MCF 10A (cell line): ENCODE measurements at regions of chr20 and their contacts with region 1.

Region 1: GRCh38 chr20:11890331-11891080 is 27.2 kb upstream of the BTBD3 start:
- DNase-seq: peak; percentile 84
- H3K4me3 Mint-ChIP-seq: peak overlapping the region; percentile 76
- H3K27ac Mint-ChIP-seq: peak overlapping the region; percentile 87
- H3K4me1 Mint-ChIP-seq: peaks cover 14% of the 10 kb centered on the region
- H3K27me3 Mint-ChIP-seq: no peaks in the 10 kb centered on the region
- CTCF ChIP-seq: no peak

Region 2: GRCh38 chr20:11698124-11698523 is 192.4 kb before region 1 on chr20:
- CTCF ChIA-PET with region 1: no interaction called
- POLR2A ChIA-PET with region 1: interaction called, 4 read pairs
- intact Hi-C with region 1: loop called (anchors 5 kb)
- DNase-seq: no peak
- H3K4me3 Mint-ChIP-seq: no peak overlapping the region
- H3K27ac Mint-ChIP-seq: no peak overlapping the region
- H3K4me1 Mint-ChIP-seq: no peaks in the 10 kb centered on the region
- H3K27me3 Mint-ChIP-seq: no peaks in the 10 kb centered on the region
- CTCF ChIP-seq: no peak

Region 3: GRCh38 chr20:11807066-11808048 is 83.1 kb before region 1 on chr20:
- CTCF ChIA-PET with region 1: no interaction called
- POLR2A ChIA-PET with region 1: interaction called, 6 read pairs
- intact Hi-C with region 1: loop called (anchors 5 kb)
- DNase-seq: peak; percentile 72
- H3K4me3 Mint-ChIP-seq: no peak overlapping the region
- H3K27ac Mint-ChIP-seq: no peak overlapping the region
- H3K4me1 Mint-ChIP-seq: peaks cover 17% of the 10 kb centered on the region
- H3K27me3 Mint-ChIP-seq: no peaks in the 10 kb centered on the region
- CTCF ChIP-seq: no peak

Region 4: GRCh38 chr20:11849976-11850670 is 40.4 kb before region 1 on chr20:
- CTCF ChIA-PET with region 1: interaction called, 3 read pairs
- POLR2A ChIA-PET with region 1: interaction called, 22 read pairs
- intact Hi-C with region 1: loop called (anchors 2 kb)
- DNase-seq: peak; percentile 98
- H3K4me3 Mint-ChIP-seq: peak overlapping the region; percentile 5
- H3K27ac Mint-ChIP-seq: peak overlapping the region; percentile 67
- H3K4me1 Mint-ChIP-seq: peaks cover 46% of the 10 kb centered on the region
- H3K27me3 Mint-ChIP-seq: no peaks in the 10 kb centered on the region
- CTCF ChIP-seq: no peak

Region 5: GRCh38 chr20:11901127-11901526 is 10.6 kb after region 1 on chr20:
- CTCF ChIA-PET with region 1: no interaction called
- POLR2A ChIA-PET with region 1: interaction called, 11 read pairs
- intact Hi-C with region 1: no loop called
- DNase-seq: peak; percentile 32
- H3K4me3 Mint-ChIP-seq: no peak overlapping the region
- H3K27ac Mint-ChIP-seq: no peak overlapping the region
- H3K4me1 Mint-ChIP-seq: peaks cover 34% of the 10 kb centered on the region
- H3K27me3 Mint-ChIP-seq: no peaks in the 10 kb centered on the region
- CTCF ChIP-seq: no peak